Mammary epithelial cell (primary cell): ENCODE measurements at regions of chr4 and their contacts with region 1.

Region 1: DNA sequence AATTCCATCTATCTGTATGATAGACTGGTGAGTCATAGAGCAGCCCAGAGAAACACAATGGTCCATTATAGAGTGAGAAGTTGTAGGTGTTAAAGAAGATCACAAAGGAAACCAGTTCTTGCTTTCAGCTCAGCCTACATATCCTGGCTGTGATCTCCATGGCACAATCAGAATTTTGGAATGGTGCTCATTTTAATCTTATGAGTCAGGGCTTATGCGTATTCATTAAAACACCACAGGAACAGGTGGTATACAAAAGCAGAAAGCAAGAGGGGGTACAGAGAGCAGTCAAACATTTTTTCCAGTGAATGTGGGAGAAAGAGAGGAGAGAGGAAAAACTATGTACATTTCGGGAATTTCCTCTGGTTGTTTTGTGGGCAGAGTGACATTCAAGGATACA is 126.9 kb downstream of the MFAP3L start:
- DNase-seq: peak; percentile 92
- H3K4me3 ChIP-seq: no peak overlapping the region
- H3K27ac ChIP-seq: peak overlapping the region; percentile 62
- H3K4me1 ChIP-seq: peaks cover 32% of the 10 kb centered on the region
- H3K27me3 ChIP-seq: no peaks in the 10 kb centered on the region
- CTCF ChIP-seq: no peak

Region 2: DNA sequence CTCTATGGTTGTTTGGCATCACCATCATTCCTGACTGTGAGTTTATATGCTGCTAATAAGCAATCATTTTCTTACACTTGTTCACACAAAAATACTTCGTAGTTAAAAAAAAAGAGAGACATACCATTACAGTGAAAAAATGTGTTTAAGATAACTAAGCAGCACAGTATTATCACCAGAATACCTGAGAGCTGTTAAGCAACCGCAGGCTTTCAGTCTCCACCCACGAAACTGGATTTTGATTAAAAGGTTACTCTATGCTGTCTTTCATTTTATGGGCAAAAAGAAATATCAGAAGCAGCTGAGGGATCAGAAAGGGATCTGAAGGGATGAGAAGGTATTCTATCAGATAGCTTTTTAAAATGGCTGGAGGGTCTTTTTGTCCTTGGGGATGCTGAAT is 435.2 kb before region 1 on chr4:
- CTCF ChIA-PET with region 1: no interaction called
- dilution Hi-C with region 1: no loop called
- in situ Hi-C with region 1: no loop called
- intact Hi-C with region 1: no loop called
- DNase-seq: no peak
- H3K4me3 ChIP-seq: no peak overlapping the region
- H3K27ac ChIP-seq: no peak overlapping the region
- H3K4me1 ChIP-seq: no peaks in the 10 kb centered on the region
- H3K27me3 ChIP-seq: no peaks in the 10 kb centered on the region
- CTCF ChIP-seq: no peak

Region 3: DNA sequence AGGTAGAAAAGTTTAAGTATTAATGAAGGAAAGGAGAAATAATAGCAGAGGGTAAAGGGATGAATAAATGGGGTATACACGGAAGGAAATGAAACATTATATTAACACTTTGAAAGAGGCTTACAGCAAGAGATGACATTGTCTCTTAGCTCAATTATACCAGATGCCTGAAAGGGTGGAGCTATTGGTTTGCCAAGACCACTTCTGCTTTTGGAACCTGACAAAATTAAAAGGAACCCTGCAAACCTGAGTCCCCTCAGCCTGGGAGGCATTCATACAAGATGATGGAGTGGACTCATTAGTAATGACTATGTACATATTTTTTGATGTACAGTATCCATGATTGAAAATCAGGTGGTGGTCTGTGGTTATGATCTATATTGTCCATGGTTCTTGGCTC is 96.4 kb before region 1 on chr4:
- CTCF ChIA-PET with region 1: no interaction called
- dilution Hi-C with region 1: no loop called
- in situ Hi-C with region 1: no loop called
- intact Hi-C with region 1: no loop called
- DNase-seq: no peak
- H3K4me3 ChIP-seq: no peak overlapping the region
- H3K27ac ChIP-seq: no peak overlapping the region
- H3K4me1 ChIP-seq: no peaks in the 10 kb centered on the region
- H3K27me3 ChIP-seq: no peaks in the 10 kb centered on the region
- CTCF ChIP-seq: no peak

Region 4: DNA sequence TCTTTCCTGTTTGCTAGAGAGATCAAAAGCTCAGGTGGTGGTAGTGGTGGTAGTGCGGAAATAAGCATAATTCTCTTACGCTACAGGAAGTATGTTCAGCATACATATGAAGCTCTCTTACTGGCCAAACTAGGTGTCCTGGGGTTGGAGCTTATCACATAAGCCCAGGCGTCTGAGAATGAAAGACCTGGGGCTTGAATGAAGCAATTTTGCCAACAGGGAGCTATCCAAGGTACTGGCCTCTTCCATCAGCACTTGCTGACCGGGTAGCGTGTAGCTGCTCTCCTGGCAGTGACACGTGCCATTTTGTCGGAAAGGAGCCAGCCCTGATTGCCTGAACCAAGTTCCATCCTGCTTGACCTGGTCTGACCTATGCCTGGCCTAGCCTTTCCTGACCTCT is 75.6 kb before region 1 on chr4:
- CTCF ChIA-PET with region 1: no interaction called
- dilution Hi-C with region 1: no loop called
- in situ Hi-C with region 1: no loop called
- intact Hi-C with region 1: loop called (anchors 5 kb)
- DNase-seq: peak; percentile 61
- H3K4me3 ChIP-seq: no peak overlapping the region
- H3K27ac ChIP-seq: no peak overlapping the region
- H3K4me1 ChIP-seq: no peaks in the 10 kb centered on the region
- H3K27me3 ChIP-seq: no peaks in the 10 kb centered on the region
- CTCF ChIP-seq: no peak

Region 5: GRCh38 chr4:169940450-169940849 is 41.2 kb after region 1 on chr4:
- CTCF ChIA-PET with region 1: no interaction called
- dilution Hi-C with region 1: no loop called
- in situ Hi-C with region 1: no loop called
- intact Hi-C with region 1: no loop called
- DNase-seq: no peak
- H3K4me3 ChIP-seq: no peak overlapping the region
- H3K27ac ChIP-seq: no peak overlapping the region
- H3K4me1 ChIP-seq: no peaks in the 10 kb centered on the region
- H3K27me3 ChIP-seq: no peaks in the 10 kb centered on the region
- CTCF ChIP-seq: peak in 1 of 2 donors; percentile 20